ENCODE measurements at regions of chr12 and their contacts with region 1.

Region 1: GRCh38 chr12:109428037-109428629 is 49.0 kb downstream of the KCTD10 start:
- DNase-seq: peak; percentile 83
- ATAC-seq: peak; percentile 84
- H3K4me3 Mint-ChIP-seq: no peak overlapping the region
- H3K27ac Mint-ChIP-seq: no peak overlapping the region
- H3K4me1 Mint-ChIP-seq: peaks cover 7% of the 10 kb centered on the region
- H3K27me3 Mint-ChIP-seq: peaks cover 3% of the 10 kb centered on the region

Region 2: DNA sequence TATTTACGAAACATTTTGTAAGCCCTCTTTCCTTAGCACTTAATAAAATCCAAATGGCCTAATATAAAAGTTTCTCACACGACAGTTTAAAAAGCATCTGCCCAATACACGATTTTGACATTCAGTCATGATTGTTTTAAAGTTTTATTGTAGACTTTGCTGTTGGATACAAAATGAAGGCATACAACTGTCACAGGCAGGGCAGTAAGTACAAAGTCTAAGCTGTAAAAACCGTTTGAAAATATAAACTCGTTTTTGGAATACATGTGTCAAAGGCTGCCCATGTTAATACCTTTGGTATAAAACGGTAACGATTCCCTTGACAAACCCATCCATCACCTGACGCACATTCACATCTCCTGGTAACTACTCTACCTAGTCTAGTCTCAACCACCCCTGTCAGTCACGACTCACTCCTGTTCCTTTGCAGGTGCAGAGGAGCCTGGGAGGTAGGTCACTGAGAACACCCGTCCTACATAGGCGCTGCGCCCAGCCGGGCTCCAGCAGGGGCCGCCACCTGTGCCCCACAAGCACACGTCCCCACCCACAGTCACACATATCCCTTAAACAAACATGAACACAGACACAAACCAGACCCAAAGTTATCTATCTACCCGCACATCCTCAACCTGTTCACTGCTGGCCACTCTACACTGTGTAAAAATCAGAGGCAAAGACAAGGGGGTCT is 21.9 kb after region 1 on chr12:
- CTCF ChIA-PET with region 1: interaction called, 15 read pairs
- DNase-seq: no peak
- ATAC-seq: no peak
- H3K4me3 Mint-ChIP-seq: no peak overlapping the region
- H3K27ac Mint-ChIP-seq: no peak overlapping the region
- H3K4me1 Mint-ChIP-seq: peaks cover 6% of the 10 kb centered on the region
- H3K27me3 Mint-ChIP-seq: no peaks in the 10 kb centered on the region

Region 3: DNA sequence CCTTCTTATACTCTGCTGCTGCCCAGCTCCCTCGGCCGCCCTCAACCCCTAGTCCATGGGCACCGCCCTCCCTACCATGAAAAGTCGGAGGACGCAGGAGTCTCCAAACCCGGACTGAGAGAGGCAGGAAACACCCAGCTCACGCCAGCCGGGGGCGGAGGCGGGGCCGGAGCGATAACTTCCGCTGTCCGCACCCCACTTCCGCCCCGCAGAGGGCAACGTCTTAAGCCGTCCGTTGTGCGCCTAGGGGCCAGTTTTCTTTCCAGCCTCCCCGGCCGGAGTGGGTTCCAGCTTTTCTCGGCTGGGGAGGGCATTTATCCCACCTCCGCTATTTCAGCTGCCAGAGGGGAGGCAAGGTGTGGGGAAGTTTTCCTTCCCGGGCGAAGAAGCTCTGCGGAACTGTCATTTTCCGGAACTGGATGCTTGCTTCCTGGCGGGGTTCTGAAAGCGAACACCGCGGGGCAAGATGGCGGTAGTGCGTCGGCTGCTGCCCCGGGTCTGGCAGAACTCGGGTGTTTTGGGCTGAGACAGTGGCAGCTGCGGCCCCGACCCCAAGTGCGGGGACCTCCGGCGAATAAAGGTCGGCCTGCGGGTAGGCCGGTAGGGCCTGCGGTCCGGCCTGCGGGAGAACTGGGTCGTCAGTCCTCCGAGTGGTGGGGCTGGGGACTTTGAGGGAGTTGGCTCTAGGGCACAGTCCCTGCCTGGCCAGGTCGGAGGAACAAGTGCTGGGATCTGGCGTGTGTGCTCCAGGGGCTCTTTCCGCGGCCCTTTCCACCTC is 49.2 kb after region 1 on chr12 and contains the starts of genes KCTD10 and UBE3B:
- CTCF ChIA-PET with region 1: interaction called, 10 read pairs
- DNase-seq: peak; percentile 92
- ATAC-seq: peak; percentile 98
- H3K4me3 Mint-ChIP-seq: peak within 1 kb of the TSS; percentile 98
- H3K27ac Mint-ChIP-seq: peak within 1 kb of the TSS; percentile 99
- H3K4me1 Mint-ChIP-seq: peaks cover 41% of the 10 kb centered on the region
- H3K27me3 Mint-ChIP-seq: no peaks in the 10 kb centered on the region
- total RNA-seq, gene KCTD10: 27.2 to 43.2 TPM
- total RNA-seq, gene UBE3B: 36.6 to 39.0 TPM

Region 4: GRCh38 chr12:109500406-109501185 is 72.5 kb after region 1 on chr12:
- CTCF ChIA-PET with region 1: no interaction called
- DNase-seq: no peak
- ATAC-seq: no peak
- H3K4me3 Mint-ChIP-seq: no peak overlapping the region
- H3K27ac Mint-ChIP-seq: no peak overlapping the region
- H3K4me1 Mint-ChIP-seq: peaks cover 8% of the 10 kb centered on the region
- H3K27me3 Mint-ChIP-seq: no peaks in the 10 kb centered on the region